Transverse colon (tissue), 4 donors: ENCODE measurements at regions of chr11 and their contacts with region 1.

Region 1: GRCh38 chr11:108654994-108655631 is 9.8 kb upstream of the DDX10 start:
- DNase-seq: peak; percentile 47
- H3K4me3 ChIP-seq: no peak overlapping the region
- H3K27ac ChIP-seq: no peak overlapping the region
- H3K4me1 ChIP-seq: no peaks in the 10 kb centered on the region
- H3K27me3 ChIP-seq: no peaks in the 10 kb centered on the region
- CTCF ChIP-seq: peak; percentile 51 to 69 (median 52)
- EP300 ChIP-seq: no peak
- POLR2A ChIP-seq: no peak

Region 2: DNA sequence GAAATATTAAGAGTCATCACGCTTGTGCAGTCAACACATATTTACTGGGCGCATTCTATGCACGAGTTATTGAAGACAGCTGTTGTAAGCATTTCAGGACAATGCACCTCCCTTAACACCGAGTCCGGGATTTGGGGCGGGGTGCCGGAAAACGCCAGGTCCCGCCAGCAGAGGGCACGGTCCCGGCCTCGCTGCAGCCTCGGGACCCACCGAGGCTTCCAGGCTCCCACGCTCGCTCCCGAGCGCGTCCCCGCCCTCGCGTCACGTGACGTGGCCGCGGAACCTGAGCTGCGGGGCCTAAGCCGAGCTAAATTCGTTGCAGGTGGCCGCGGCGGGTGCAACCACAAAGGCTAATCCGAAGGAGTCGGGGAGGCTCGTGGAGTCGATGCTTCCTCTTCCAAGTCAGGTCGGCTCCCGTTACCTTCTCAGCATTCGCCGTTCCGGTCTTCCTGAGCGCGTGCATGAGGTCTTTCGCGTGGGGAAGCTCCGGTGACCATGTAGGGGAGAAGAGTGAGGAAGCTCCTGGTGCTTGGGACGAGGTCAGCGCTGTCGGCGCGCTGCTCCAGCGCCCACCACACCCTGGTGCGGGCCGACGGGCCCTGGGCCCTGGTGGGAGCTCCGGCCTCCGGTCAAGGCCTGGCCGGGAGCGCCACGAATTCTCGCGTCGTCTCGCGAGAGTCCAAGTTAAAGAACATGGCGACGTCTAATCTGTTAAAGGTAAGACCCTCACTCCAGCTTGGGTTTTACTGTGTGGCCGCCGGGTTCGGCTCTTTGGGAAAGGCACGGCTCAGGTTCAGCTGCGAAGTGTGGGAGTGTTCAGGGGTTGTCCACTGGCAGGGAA is 646.2 kb before region 1 on chr11 and contains the start of gene CUL5:
- in situ Hi-C with region 1: loop called in 2 of 4 experiments (anchors 10 to 25 kb)
- intact Hi-C with region 1: no loop called
- DNase-seq: peak; percentile 93
- H3K4me3 ChIP-seq: peak within 1 kb of the TSS; percentile 81 to 99 (median 82)
- H3K27ac ChIP-seq: peak within 1 kb of the TSS; percentile 92 to 97 (median 97)
- H3K4me1 ChIP-seq: peaks cover 14 to 46% (median 24%) of the 10 kb centered on the region in 4 donors
- H3K27me3 ChIP-seq: no peaks in the 10 kb centered on the region
- CTCF ChIP-seq: peak; percentile 88 to 93 (median 91)
- EP300 ChIP-seq: no peak
- POLR2A ChIP-seq: peak; percentile 80
- total RNA-seq, gene CUL5: 23.8 to 33.6 (median 27.7) TPM

Region 3: DNA sequence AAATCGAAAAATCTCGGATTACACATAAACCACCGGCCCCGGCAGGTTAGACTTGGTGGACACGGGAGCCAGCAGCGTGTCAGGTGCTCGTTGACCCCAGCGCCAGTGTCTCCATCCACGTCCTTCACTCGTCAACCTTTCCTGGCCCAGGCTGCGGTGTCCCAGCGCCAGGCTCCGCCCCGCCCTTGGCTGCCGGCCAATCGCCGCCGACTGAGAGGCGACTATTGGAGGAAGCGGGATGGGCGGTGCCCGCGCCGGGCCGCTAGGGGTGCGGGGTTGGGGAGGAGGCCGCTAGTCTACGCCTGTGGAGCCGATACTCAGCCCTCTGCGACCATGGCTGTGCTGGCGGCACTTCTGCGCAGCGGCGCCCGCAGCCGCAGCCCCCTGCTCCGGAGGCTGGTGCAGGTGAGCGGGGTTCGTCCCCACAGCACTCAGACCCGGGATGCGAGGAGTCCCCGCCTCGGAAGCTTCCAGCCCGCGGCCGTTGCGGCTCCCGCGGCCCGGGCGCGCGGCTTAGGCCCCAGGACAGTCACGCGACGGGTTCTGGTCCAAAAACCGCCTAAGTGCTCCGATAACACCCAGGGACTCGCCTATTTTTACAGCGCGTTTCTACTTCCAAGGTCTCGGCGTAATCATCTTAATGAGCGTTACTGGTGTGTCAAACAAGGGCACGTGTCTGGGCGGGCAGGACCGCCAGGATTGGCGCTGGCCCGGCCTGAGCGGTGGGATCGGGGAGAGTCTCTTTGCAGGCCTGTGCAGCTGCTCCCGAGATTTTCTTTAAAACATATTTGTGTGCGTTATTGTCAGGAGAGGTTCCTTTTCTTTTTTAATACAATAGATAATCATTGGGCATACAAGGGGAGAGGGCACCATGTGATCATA is 533.6 kb before region 1 on chr11 and contains the start of gene ACAT1:
- in situ Hi-C with region 1: loop called in 2 of 4 experiments (anchors 10 to 25 kb)
- intact Hi-C with region 1: no loop called
- DNase-seq: peak; percentile 99
- H3K4me3 ChIP-seq: peak within 1 kb of the TSS; percentile 64 to 80 (median 76)
- H3K27ac ChIP-seq: peak within 1 kb of the TSS; percentile 93 to 96 (median 96)
- H3K4me1 ChIP-seq: peaks cover 9 to 39% (median 27%) of the 10 kb centered on the region in 4 donors
- H3K27me3 ChIP-seq: no peaks in the 10 kb centered on the region
- CTCF ChIP-seq: peak; percentile 36 to 79 (median 49)
- EP300 ChIP-seq: no peak
- POLR2A ChIP-seq: peak; percentile 92
- total RNA-seq, gene ACAT1: 77.4 to 450 (median 242) TPM

Region 4: DNA sequence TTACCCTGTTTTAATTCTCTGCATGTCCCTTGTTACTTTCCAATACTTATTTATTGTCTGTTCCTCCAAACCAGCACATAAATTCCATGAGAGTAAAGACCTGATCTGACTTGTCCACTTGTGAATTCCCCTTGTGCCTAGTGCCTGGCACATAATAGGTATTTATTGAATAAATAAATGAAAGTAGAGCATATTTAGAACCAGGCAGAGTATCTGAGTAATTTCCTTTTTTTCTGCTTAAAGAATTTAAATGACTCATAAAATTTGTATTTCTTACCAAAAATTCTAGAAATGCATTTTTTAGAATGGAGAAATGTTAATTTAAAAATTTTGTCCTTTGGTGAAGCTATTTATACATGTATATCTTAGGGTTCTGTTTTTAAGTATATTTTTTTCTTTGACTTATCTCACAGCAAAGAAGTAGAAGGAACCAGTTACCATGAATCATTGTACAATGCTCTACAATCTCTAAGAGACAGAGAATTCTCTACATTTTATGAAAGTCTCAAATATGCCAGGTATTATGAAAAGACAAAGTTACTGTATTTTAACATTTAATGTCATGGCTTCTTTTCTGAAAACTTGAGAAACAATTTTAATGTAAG is 335.5 kb before region 1 on chr11:
- in situ Hi-C with region 1: loop called in 1 of 4 experiments (anchors 10 kb)
- intact Hi-C with region 1: no loop called
- DNase-seq: no peak
- H3K4me3 ChIP-seq: no peak overlapping the region
- H3K27ac ChIP-seq: no peak overlapping the region
- H3K4me1 ChIP-seq: no peaks in the 10 kb centered on the region
- H3K27me3 ChIP-seq: no peaks in the 10 kb centered on the region
- CTCF ChIP-seq: no peak
- EP300 ChIP-seq: no peak
- POLR2A ChIP-seq: no peak

Region 5: DNA sequence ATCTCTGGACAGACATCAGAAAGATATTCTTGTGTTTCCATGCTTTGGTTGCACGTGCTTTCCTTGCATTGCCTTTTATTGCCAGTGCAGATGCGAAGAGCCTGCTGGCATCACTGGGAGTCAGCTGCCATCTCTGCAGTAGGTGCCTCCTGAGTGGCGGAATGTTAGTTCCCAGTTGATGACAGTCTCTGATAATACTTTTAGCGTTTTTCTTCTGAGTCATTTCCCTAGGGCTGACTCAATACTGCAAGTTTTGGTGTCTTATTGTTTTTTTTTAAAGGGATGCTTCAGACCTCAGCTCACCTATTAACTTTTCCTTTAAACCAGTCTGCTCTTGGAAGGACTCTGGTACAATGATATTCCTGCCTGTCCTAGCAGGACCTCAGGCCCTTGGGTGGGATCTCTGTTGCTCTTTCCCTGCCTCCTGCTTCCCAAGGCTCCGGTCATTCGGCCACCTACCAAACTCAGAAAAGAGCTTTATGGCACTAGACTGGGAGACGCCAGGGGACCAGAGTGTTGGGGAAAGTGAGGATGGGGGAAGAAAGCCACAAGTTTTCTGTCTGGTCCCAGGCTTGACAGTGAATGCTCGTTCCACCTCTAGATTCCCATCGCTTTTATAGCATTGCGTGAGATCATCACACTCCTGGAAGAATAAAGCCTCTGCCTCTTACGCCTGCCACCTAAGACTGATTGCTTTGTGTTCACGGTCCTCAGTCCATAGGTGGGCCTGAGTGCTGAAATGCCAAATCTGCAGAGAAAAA is 318.5 kb after region 1 on chr11:
- in situ Hi-C with region 1: no loop called
- intact Hi-C with region 1: no loop called
- DNase-seq: no peak
- H3K4me3 ChIP-seq: no peak overlapping the region
- H3K27ac ChIP-seq: no peak overlapping the region
- H3K4me1 ChIP-seq: no peaks in the 10 kb centered on the region
- H3K27me3 ChIP-seq: no peaks in the 10 kb centered on the region
- CTCF ChIP-seq: no peak
- EP300 ChIP-seq: no peak
- POLR2A ChIP-seq: no peak

Region 6: DNA sequence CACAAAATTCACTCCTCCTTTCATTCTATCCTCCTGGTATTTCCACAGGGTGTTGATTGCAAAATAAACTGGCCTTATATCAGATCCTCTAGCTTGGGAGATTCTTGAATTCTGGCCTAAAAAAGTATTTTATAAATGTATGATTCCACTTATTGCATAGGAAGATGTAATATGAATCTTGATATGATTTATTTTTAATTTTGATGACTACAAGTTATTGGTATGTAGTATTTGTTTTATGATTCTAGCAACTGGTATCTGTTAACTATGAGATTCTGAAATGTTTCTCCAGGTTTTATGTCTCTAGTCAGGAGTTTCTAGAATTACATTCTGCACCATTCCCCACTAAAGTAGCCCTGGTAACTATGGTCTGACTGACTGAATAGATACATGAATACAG is 393.0 kb after region 1 on chr11:
- in situ Hi-C with region 1: no loop called
- intact Hi-C with region 1: no loop called
- DNase-seq: no peak
- H3K4me3 ChIP-seq: no peak overlapping the region
- H3K27ac ChIP-seq: no peak overlapping the region
- H3K4me1 ChIP-seq: no peaks in the 10 kb centered on the region
- H3K27me3 ChIP-seq: no peaks in the 10 kb centered on the region
- CTCF ChIP-seq: no peak
- EP300 ChIP-seq: no peak
- POLR2A ChIP-seq: no peak